ENCODE measurements at regions of chr14 and their contacts with region 1.

Region 1: GRCh38 chr14:64636208-64636979 is 67.8 kb upstream of the PLEKHG3 start:
- DNase-seq: peak; percentile 41 to 59
- ATAC-seq: peak; percentile 89 to 92
- H3K4me3 ChIP-seq: no peak overlapping the region
- H3K27ac ChIP-seq: no peak overlapping the region
- H3K4me1 ChIP-seq: peaks cover 0 to 5% of the 10 kb centered on the region in 2 donors
- H3K27me3 ChIP-seq: no peaks in the 10 kb centered on the region
- CTCF ChIP-seq: peak; percentile 82 to 92 (median 89)
- POLR2A ChIP-seq: no peak

Region 2: GRCh38 chr14:64338616-64339316 is 297.6 kb before region 1 on chr14:
- in situ Hi-C with region 1: loop called in 1 of 4 experiments (anchors 25 kb)
- intact Hi-C with region 1: no loop called
- DNase-seq: peak; percentile 89 to 93
- ATAC-seq: peak; percentile 96 to 97
- H3K4me3 ChIP-seq: peak overlapping the region; percentile 63 to 90 (median 79)
- H3K27ac ChIP-seq: peak overlapping the region; percentile 70 to 82 (median 74)
- H3K4me1 ChIP-seq: peaks cover 6 to 9% of the 10 kb centered on the region in 2 donors
- H3K27me3 ChIP-seq: no peaks in the 10 kb centered on the region
- CTCF ChIP-seq: no peak
- POLR2A ChIP-seq: peak; percentile 51 to 82

Region 3: GRCh38 chr14:64421166-64421565 is 215.2 kb before region 1 on chr14:
- in situ Hi-C with region 1: loop called in 2 of 4 experiments (anchors 10 to 25 kb)
- intact Hi-C with region 1: no loop called
- DNase-seq: peak in 1 of 2 donors; percentile 69
- ATAC-seq: peak; percentile 80 to 93
- H3K4me3 ChIP-seq: no peak overlapping the region
- H3K27ac ChIP-seq: peak overlapping the region; percentile 37 to 71 (median 56)
- H3K4me1 ChIP-seq: peaks cover 0 to 4% of the 10 kb centered on the region in 2 donors
- H3K27me3 ChIP-seq: no peaks in the 10 kb centered on the region
- CTCF ChIP-seq: no peak
- POLR2A ChIP-seq: no peak

Region 4: DNA sequence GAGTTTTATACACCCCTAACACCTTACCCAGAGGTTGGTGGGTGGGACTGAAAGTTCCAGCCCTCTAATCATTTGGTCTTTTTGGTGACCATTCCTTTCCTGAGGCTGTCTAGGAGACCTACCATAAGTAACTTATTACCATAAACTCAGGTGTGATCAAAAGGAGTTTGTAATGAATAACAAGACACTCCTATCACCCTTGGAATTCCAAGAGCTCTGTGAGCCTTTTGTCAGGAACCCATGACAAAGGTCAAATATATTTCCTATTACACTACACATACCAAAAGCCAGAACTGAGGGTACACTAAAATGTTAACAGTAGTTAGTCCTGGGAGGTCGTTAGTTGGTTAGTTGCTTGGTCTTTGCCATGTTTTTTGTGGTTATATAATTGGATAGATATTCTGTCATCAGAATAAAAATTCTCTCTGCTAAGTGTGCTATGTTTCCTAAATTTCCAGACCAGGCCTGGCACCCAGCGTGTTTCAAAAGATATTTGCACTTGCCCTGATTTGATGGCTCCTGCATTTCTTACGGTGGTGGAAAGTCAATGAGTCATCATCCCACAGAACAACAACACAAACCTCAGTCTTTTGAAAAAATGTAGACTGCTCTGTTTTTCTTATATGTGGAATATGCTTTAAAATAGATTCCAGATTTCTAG is 198.1 kb before region 1 on chr14:
- in situ Hi-C with region 1: loop called in 2 of 4 experiments (anchors 10 to 25 kb)
- intact Hi-C with region 1: loop called (anchors 5 kb)
- DNase-seq: no peak
- ATAC-seq: no peak
- H3K4me3 ChIP-seq: no peak overlapping the region
- H3K27ac ChIP-seq: no peak overlapping the region
- H3K4me1 ChIP-seq: no peaks in the 10 kb centered on the region
- H3K27me3 ChIP-seq: no peaks in the 10 kb centered on the region
- CTCF ChIP-seq: no peak
- POLR2A ChIP-seq: no peak

Region 5: DNA sequence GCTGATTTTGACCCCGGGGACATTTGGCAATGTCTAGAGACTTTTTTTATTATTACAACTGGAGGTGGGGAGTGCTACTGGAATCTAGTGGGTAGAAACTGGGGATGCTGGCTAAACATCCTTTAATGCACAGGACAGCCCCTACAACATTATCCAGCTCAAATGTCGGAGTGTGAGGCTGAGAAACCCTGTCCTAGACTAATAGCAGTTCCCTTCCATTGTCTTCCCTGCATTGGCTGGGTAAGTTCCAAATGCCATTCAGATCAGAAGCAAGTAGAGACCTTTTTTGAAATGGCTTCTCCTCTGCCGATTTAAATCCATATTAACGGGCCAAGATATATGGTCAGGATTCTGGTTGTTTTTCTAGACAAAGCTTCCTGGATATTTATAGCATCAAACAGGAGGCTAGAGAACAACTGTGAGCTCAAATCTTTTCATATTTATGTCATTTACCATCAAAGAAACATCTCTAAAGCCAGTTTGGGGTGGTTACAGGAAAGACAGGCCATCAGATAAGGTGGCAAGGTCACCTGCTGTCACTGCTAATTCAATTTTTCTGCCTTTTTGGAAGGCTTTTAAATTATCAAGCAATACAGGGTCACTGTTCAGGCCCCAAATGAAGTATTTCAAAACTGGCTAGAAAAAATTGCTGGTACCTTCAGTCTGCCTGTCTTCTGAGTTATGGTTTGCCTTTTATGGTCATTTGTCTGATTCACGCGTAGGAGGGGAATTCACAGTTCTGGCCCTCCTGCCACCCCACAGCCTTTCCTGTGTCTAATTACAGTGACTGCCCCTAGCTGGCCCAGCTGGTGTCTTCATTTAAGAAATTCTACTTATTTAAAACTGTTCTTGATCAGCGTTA is 191.2 kb before region 1 on chr14:
- in situ Hi-C with region 1: loop called in 1 of 4 experiments (anchors 25 kb)
- intact Hi-C with region 1: no loop called
- DNase-seq: no peak
- ATAC-seq: no peak
- H3K4me3 ChIP-seq: no peak overlapping the region
- H3K27ac ChIP-seq: peak overlapping the region in 1 of 4 donors; percentile 1
- H3K4me1 ChIP-seq: no peaks in the 10 kb centered on the region
- H3K27me3 ChIP-seq: no peaks in the 10 kb centered on the region
- CTCF ChIP-seq: no peak
- POLR2A ChIP-seq: no peak

Region 6: DNA sequence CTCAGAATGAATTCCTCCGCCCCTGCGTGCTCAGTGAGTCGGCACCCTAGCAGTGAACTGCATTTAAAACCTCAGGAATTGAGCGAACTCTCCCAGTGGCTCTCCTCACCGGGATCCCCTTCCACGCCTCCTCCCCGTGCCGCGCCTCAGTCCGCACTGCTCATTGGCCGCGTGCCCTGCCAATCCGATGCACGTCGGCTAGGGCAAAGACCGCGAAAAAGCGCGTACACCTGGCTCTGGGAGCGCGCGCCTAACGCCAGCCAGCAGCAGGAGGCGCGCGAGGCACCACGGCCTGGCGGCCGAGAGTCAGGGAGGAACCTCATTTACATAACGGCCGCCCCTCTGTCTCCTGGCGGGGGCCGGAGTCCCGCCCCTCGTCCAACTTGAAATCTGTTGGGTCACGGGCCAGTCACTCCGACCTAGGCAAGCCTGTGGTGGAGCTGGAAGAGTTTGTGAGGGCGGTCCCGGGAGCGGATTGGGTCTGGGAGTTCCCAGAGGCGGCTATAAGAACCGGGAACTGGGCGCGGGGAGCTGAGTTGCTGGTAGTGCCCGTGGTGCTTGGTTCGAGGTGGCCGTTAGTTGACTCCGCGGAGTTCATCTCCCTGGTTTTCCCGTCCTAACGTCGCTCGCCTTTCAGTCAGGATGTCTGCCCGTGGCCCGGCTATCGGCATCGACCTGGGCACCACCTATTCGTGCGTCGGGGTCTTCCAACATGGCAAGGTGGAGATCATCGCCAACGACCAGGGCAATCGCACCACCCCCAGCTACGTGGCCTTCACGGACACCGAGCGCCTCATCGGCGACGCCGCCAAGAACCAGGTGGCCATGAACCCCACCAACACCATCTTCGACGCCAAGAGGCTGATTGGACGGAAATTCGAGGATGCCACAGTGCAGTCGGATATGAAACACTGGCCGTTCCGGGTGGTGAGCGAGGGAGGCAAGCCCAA is 95.9 kb before region 1 on chr14 and contains the start of gene HSPA2:
- in situ Hi-C with region 1: loop called (anchors 10 to 25 kb)
- intact Hi-C with region 1: loop called (anchors 1 kb)
- DNase-seq: peak; percentile 100
- ATAC-seq: peak; percentile 90 to 94
- H3K4me3 ChIP-seq: peak within 1 kb of the TSS; percentile 61 to 81 (median 74)
- H3K27ac ChIP-seq: peak within 1 kb of the TSS; percentile 87 to 93 (median 88)
- H3K4me1 ChIP-seq: peaks cover 23 to 39% of the 10 kb centered on the region in 2 donors
- H3K27me3 ChIP-seq: no peaks in the 10 kb centered on the region
- CTCF ChIP-seq: peak; percentile 79 to 87 (median 84)
- POLR2A ChIP-seq: peak; percentile 96 to 100
- total RNA-seq, gene HSPA2: 69.6 to 113 (median 96.4) TPM

Region 7: DNA sequence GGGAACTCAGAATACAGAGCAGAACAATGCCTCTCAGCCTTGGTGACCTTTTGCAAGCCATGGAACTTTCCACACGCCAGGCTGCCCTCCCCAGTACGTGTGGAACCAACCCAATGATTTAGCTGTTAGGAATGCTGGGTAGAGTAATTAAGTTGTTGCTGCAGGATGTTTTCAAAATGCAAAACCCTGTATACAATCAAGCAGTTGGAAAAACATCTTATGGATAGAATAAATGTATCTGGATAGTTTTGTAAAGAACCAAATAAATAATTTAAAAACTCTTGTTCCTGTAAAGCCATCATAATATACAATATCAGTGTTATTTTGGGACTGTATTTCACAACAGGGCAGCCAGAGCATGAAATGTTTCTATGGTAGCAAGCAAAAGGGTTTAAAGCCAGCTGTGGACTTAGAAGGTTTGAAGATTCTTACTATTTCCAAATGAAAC is 67.2 kb before region 1 on chr14:
- in situ Hi-C with region 1: no loop called
- intact Hi-C with region 1: loop called (anchors 5 kb)
- DNase-seq: peak; percentile 70 to 85
- ATAC-seq: peak; percentile 93 to 94
- H3K4me3 ChIP-seq: no peak overlapping the region
- H3K27ac ChIP-seq: peak overlapping the region; percentile 76 to 92 (median 85)
- H3K4me1 ChIP-seq: peaks cover 51 to 65% of the 10 kb centered on the region in 2 donors
- H3K27me3 ChIP-seq: no peaks in the 10 kb centered on the region
- CTCF ChIP-seq: no peak
- POLR2A ChIP-seq: no peak

Measured in gastrocnemius medialis (tissue), 4 donors.